PC-3 (cell line): ENCODE measurements at regions of chr15 and their contacts with region 1.

Region 1: DNA sequence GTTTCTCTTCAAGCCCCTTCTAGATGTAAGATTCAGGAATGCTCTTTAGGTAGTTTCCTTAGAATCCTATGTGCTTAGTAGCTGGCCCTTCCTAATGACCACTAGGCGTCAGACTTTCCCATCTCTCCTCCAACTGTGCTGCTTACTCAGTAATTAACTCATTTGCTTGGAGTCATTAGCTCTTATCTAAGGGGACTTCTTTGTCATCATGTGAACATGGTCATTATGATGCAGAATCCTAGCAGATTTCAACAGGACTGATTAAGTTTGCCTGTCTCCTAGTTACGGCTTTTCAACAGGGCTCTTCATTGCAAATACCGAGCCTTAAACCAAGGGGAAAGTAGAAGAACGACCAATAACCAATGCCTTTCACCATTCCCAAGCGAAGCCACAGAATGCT is 46.4 kb downstream of the GJD2 start:
- DNase-seq: peak; percentile 55
- ATAC-seq: peak; percentile 60
- H3K4me3 ChIP-seq: no peak overlapping the region
- H3K27ac ChIP-seq: no peak overlapping the region
- H3K4me1 ChIP-seq: peaks cover 13% of the 10 kb centered on the region
- H3K27me3 ChIP-seq: peaks cover 36% of the 10 kb centered on the region
- CTCF ChIP-seq: peak; percentile 90

Region 2: GRCh38 chr15:34621675-34622074 is 86.7 kb before region 1 on chr15:
- CTCF ChIA-PET with region 1: interaction called, 8 read pairs
- POLR2A ChIA-PET with region 1: no interaction called
- intact Hi-C with region 1: loop called (anchors 1 kb)
- DNase-seq: peak; percentile 64
- ATAC-seq: peak; percentile 79
- H3K4me3 ChIP-seq: no peak overlapping the region
- H3K27ac ChIP-seq: no peak overlapping the region
- H3K4me1 ChIP-seq: peaks cover 12% of the 10 kb centered on the region
- H3K27me3 ChIP-seq: peaks cover 13% of the 10 kb centered on the region
- CTCF ChIP-seq: peak; percentile 85

Region 3: GRCh38 chr15:34628577-34629152 is 79.8 kb before region 1 on chr15:
- CTCF ChIA-PET with region 1: no interaction called
- POLR2A ChIA-PET with region 1: interaction called, 5 read pairs
- intact Hi-C with region 1: loop called (anchors 2 kb)
- DNase-seq: peak; percentile 77
- ATAC-seq: peak; percentile 95
- H3K4me3 ChIP-seq: no peak overlapping the region
- H3K27ac ChIP-seq: peak overlapping the region; percentile 56
- H3K4me1 ChIP-seq: peaks cover 37% of the 10 kb centered on the region
- H3K27me3 ChIP-seq: no peaks in the 10 kb centered on the region
- CTCF ChIP-seq: no peak

Region 4: GRCh38 chr15:34969340-34970097 is 261.1 kb after region 1 on chr15 and contains the start of gene AQR:
- CTCF ChIA-PET with region 1: interaction called, 3 read pairs
- POLR2A ChIA-PET with region 1: interaction called, 4 read pairs
- intact Hi-C with region 1: loop called (anchors 2 kb)
- DNase-seq: peak; percentile 99
- ATAC-seq: peak; percentile 100
- H3K4me3 ChIP-seq: peak within 1 kb of the TSS; percentile 91
- H3K27ac ChIP-seq: no peak within 1 kb of the TSS
- H3K4me1 ChIP-seq: 0 out of 2 replicates have a peak, but pooled peaks cover 5% of the 10 kb centered on the region
- H3K27me3 ChIP-seq: no peaks in the 10 kb centered on the region
- CTCF ChIP-seq: peak; percentile 92
- total RNA-seq, gene AQR: 26.1 and 34.2 TPM in 2 replicates